K562 (cell line): ENCODE measurements at regions of chr14 and their contacts with region 1.

Region 1: DNA sequence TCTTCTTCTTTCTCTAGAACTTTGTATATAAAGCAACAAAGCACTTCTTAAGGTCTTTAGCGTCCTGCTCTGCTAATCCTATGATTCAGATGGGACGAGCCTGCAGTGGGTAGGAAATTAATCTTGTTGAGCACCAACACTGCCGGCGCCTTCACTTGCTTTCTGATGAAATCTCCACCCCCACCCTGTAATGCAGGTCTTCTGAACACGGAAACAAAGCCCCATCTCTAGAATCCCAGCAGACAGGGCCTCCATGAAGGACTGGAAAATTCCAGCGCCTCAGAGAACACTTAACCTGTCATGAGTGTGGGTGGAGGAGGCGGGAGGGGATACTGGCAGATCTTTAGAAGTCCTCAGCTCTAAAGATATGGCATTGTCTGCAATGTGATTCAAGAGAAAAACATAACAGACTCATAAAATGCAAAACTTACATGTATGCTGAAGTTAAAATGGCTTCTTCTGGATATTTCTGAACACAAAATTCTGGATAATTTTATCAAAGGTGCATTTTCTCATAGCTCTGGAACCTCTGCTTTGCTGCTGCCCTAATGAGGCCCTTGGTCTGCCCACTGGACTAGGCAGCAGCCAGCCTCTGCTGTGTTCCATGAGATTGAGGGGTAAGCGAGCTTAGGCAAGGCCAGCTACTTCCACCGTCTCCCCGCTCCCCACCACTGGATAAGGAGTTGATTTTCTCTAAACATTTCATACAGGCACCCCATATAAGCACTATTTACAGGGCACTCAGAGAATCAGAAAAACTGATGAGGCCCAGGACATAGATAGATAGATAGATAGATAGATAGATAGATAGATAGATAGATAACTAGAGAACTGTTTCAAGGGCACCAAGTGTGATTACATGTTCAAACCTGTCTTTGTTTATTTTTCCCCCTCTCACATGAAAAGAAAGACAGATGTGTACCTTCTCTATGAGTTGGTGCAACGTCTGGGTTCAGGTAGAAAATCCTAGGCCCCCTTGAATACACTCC is 43.1 kb downstream of the ZFP36L1 start:
- DNase-seq: peak in 3 of 4 experiments; percentile 25 to 68 (median 36)
- ATAC-seq: peak; percentile 81
- H3K4me3 ChIP-seq: no peak overlapping the region
- H3K27ac ChIP-seq: peak overlapping the region; percentile 60; the same call in 2 of the 3 replicates
- H3K4me1 ChIP-seq: peaks cover 6 to 43% of the 10 kb centered on the region in 2 experiments; a peak in 4 of 5 replicates
- H3K27me3 ChIP-seq: no peaks in the 10 kb centered on the region
- CTCF ChIP-seq: no peak
- EP300 ChIP-seq: peak; percentile 75
- POLR2A ChIP-seq: no peak
- RAD21 ChIP-seq: no peak

Region 2: DNA sequence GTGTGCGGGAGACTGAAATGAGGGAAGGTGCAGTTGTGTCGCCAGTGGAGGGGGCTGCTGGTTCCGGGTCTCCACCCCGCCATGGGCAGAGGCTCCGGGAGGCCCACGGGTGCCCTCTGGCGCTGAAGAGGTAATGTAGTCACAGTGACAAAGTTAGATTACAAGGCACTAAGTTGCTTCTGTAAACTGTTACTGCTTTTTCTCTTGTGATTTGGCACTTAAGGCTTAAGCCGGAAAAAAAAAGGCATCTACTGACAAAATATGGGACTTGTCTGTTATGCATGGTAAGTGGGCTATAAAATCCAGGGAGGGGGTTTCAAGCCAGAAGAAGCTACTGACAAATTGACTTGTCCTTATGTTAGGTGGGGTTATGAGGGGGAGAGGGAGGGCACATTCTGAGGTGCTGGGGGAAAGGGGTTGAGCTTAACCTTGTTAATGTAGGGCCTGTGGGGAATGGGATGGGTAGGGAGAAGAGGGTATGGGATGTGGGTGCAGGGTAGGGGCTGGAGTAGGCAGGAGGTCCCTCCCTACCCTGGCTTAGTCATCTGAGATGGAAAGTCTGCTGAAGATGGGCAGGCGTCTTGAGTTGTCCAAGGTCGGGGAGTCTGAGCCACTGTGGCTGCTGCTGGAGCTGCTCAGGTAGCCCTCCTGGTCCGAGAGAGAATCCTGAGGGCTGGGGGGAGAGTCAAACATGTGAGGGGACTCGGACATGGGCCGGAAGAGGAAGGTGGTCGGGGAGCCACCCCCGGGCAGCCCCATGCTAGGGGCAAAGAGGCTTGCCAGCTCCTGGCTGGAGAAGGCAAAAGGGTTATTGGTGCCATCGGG is 39.4 kb after region 1 on chr14:
- CTCF ChIA-PET with region 1: interaction called, 4 read pairs
- POLR2A ChIA-PET with region 1: interaction called, 3 read pairs
- in situ Hi-C with region 1: no loop called
- intact Hi-C with region 1: loop called (anchors 5 kb)
- DNase-seq: peak; percentile 65 to 78 (median 70)
- ATAC-seq: peak; percentile 64
- H3K4me3 ChIP-seq: no peak overlapping the region
- H3K27ac ChIP-seq: no peak overlapping the region; the same call in 2 of the 3 replicates
- H3K4me1 ChIP-seq: peaks cover 25 to 30% of the 10 kb centered on the region in 2 experiments; a peak in 4 of 5 replicates
- H3K27me3 ChIP-seq: no peaks in the 10 kb centered on the region
- CTCF ChIP-seq: peak; percentile 80 to 99 (median 93)
- EP300 ChIP-seq: no peak
- POLR2A ChIP-seq: no peak
- RAD21 ChIP-seq: peak; percentile 90 to 96

Region 3: GRCh38 chr14:68951042-68951914 is 201.5 kb after region 1 on chr14:
- CTCF ChIA-PET with region 1: no interaction called
- POLR2A ChIA-PET with region 1: no interaction called
- in situ Hi-C with region 1: no loop called
- intact Hi-C with region 1: no loop called
- DNase-seq: peak in 1 of 4 experiments; percentile 45
- ATAC-seq: peak; percentile 53
- H3K4me3 ChIP-seq: no peak overlapping the region
- H3K27ac ChIP-seq: peak overlapping the region; percentile 53; the same call in 2 of the 3 replicates
- H3K4me1 ChIP-seq: peaks cover 22 to 26% of the 10 kb centered on the region in 2 experiments; a peak in 4 of 5 replicates
- H3K27me3 ChIP-seq: no peaks in the 10 kb centered on the region
- CTCF ChIP-seq: no peak
- EP300 ChIP-seq: no peak
- POLR2A ChIP-seq: no peak
- RAD21 ChIP-seq: no peak